OCI-LY7 (cell line): ENCODE measurements at regions of chr13 and their contacts with region 1.

Region 1: GRCh38 chr13:41222259-41222852 is 28.0 kb upstream of the KBTBD7 start:
- DNase-seq: peak; percentile 63
- H3K4me3 ChIP-seq: no peak overlapping the region
- H3K27ac ChIP-seq: no peak overlapping the region
- H3K4me1 ChIP-seq: no peaks in the 10 kb centered on the region
- CTCF ChIP-seq: peak; percentile 88

Region 2: GRCh38 chr13:41075034-41075433 is 147.3 kb before region 1 on chr13:
- CTCF ChIA-PET with region 1: no interaction called
- POLR2A ChIA-PET with region 1: interaction called, 3 read pairs
- intact Hi-C with region 1: loop called (anchors 1 kb)
- DNase-seq: peak; percentile 66
- H3K4me3 ChIP-seq: no peak overlapping the region
- H3K27ac ChIP-seq: no peak overlapping the region
- H3K4me1 ChIP-seq: no peaks in the 10 kb centered on the region
- CTCF ChIP-seq: peak; percentile 87